AG04450 (cell line): ENCODE measurements at regions of chr3 and their contacts with region 1.

Region 1: DNA sequence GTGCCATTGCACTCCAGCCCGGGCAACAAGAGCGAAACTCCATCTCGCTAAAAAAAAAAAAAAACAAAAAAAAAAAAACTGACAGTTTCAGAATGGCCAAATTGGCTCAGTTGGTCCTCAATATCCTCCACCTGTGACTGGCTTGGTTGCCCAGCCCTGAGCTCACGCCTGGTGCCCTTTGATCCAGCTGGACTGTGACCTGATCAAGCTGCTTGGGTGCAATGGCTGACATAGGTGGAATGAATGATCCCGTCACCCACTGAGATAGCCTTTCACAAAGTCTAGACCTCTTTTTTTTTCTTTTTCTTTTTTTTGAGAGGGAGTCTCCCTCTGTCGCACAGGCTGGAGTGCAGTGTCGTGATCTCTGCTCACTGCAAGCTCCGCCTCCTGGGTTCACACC is 254.6 kb downstream of the FOXP1 start:
- DNase-seq: no peak
- H3K4me3 ChIP-seq: no peak overlapping the region
- H3K27ac ChIP-seq: no peak overlapping the region
- H3K27me3 ChIP-seq: no peaks in the 10 kb centered on the region
- CTCF ChIP-seq: no peak

Region 2: GRCh38 chr3:71497367-71497897 is 168.5 kb after region 1 on chr3:
- CTCF ChIA-PET with region 1: no interaction called
- POLR2A ChIA-PET with region 1: interaction called, 15 read pairs
- DNase-seq: no peak
- H3K4me3 ChIP-seq: no peak overlapping the region
- H3K27ac ChIP-seq: no peak overlapping the region
- H3K27me3 ChIP-seq: no peaks in the 10 kb centered on the region
- CTCF ChIP-seq: no peak